Dorsolateral prefrontal cortex (tissue), 120 donors: ENCODE measurements at regions of chr20 and their contacts with region 1.

Region 1: GRCh38 chr20:42530822-42531448 is 658.8 kb downstream of the PTPRT start:
- DNase-seq: no peak
- H3K4me3 ChIP-seq: peak overlapping the region in 1 of 59 donors; percentile 24
- H3K27ac ChIP-seq: no peak overlapping the region
- H3K27me3 ChIP-seq: peaks cover 0 to 3% (median 0%) of the 10 kb centered on the region in 45 donors
- CTCF ChIP-seq: peak; percentile 44 to 84 (median 74)

Region 2: DNA sequence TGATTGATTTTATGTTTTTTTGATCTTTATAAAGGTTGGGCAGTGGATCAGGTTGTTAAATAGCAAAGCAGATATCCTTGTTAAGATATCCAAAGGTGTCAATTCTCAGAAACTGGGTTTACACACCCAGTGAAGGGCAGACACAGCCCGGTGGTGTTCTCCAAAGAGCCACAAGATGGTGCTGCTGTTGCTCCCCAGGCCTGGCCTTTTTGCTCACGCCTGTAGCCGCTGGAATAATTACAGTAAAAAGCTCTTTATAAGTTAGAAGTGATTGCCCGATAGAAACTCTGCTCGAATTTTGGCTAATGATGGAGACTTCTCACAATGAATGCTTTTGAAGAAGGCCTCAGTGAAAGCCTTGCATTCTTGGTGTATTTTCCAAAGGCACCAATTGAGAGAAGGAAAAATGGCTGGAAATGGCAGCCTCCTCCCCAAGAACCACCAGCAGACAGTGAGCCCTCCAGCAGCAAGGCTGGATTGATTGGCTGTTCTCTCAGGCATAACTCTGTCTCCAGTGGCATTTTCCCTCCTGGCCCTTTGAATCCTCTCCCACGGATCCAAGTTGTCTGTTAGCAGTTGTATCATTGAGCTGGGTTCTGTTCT is 792.2 kb before region 1 on chr20:
- intact Hi-C with region 1: loop called in 1 of 2 experiments (anchors 5 kb)
- DNase-seq: peak; percentile 9 to 77 (median 68)
- H3K4me3 ChIP-seq: no peak overlapping the region
- H3K27ac ChIP-seq: peak overlapping the region in 2 of 59 donors; percentile 26 to 38
- H3K27me3 ChIP-seq: peaks cover 0 to 4% (median 0%) of the 10 kb centered on the region in 45 donors
- CTCF ChIP-seq: peak; percentile 43 to 93 (median 84)

Region 3: GRCh38 chr20:42191143-42191917 is 339.6 kb before region 1 on chr20:
- intact Hi-C with region 1: loop called in 1 of 2 experiments (anchors 10 kb)
- DNase-seq: no peak
- H3K4me3 ChIP-seq: no peak overlapping the region
- H3K27ac ChIP-seq: peak overlapping the region in 21 of 59 donors; percentile 12 to 87 (median 72)
- H3K27me3 ChIP-seq: no peaks in the 10 kb centered on the region
- CTCF ChIP-seq: peak in 1 of 56 donors; percentile 13

Region 4: GRCh38 chr20:42204203-42204942 is 326.6 kb before region 1 on chr20:
- intact Hi-C with region 1: loop called (anchors 2 to 10 kb)
- DNase-seq: peak in 2 of 10 donors; percentile 48 to 59
- H3K4me3 ChIP-seq: no peak overlapping the region
- H3K27ac ChIP-seq: no peak overlapping the region
- H3K27me3 ChIP-seq: no peaks in the 10 kb centered on the region
- CTCF ChIP-seq: peak; percentile 49 to 83 (median 71)